Mammary epithelial cell (primary cell): ENCODE measurements at regions of chr9 and their contacts with region 1.

Region 1: DNA sequence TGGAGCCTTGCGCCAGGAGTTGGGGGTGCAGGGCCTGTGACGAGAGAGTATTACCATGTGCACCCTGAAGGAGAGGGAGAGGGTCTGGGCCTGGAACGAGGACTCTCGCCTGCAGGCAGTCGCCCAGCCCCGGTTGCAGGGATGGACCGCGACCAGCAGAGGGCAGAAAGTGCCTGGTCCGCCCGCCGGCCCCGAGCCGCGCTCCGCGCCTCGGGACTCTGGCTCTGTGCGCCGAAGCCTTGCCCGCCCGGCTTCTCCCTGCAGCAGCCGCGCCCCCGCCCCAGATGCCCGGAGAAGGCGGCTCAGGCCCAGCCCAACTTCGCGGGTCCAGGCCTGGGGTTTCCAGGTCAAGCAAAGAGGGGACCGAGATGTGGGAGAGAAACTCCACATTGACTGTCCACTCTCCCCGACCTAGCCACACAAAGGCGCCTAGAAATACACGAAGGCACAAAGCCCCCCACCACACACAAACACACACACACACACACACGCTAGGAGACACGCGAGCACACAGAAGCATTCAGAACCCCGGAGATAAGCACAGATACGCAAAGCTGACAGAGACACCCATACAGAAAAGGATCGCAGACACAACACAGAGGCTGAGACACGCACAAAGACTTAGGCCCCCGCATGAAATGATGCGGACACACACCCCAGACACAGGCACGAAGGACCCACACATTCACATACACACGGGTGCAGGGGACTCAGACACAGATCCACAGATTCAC is 2.0 kb upstream of the LMX1B start:
- DNase-seq: peak; percentile 66
- H3K4me3 ChIP-seq: peak overlapping the region; percentile 1 to 78 (median 63)
- H3K27ac ChIP-seq: no peak overlapping the region
- H3K4me1 ChIP-seq: peaks cover 29% of the 10 kb centered on the region
- H3K27me3 ChIP-seq: no peaks in the 10 kb centered on the region
- CTCF ChIP-seq: peak; percentile 77 to 87

Region 2: DNA sequence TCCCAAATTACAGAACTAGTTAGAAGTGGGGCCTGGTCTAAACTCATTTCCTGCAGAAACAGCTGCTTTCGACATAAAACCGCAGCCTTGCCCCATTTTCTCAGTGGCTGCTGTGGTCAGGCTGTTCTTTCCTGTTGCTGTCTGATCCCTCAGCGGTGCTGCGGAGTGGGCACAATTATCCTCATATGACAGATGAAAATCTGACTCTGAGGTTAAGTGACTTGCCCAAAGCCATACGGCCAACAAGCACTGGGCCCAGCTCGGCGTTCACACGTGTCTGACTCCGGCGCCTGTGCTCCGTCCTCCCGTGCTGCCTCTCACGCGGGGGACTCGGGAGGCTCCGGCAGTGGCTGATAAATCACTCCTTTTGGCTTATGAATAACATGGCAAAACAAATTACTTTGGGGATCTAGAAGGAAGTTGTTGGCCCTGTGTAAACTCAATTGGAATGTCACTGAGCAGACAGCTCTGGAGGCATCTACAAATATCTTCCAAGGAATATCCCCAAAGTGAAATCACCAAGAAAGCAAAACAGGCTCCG is 140.6 kb before region 1 on chr9:
- CTCF ChIA-PET with region 1: no interaction called
- dilution Hi-C with region 1: no loop called
- in situ Hi-C with region 1: no loop called
- intact Hi-C with region 1: no loop called
- DNase-seq: no peak
- H3K4me3 ChIP-seq: no peak overlapping the region
- H3K27ac ChIP-seq: no peak overlapping the region
- H3K4me1 ChIP-seq: no peaks in the 10 kb centered on the region
- H3K27me3 ChIP-seq: no peaks in the 10 kb centered on the region
- CTCF ChIP-seq: no peak

Region 3: GRCh38 chr9:126500684-126501382 is 110.9 kb before region 1 on chr9:
- CTCF ChIA-PET with region 1: no interaction called
- dilution Hi-C with region 1: no loop called
- in situ Hi-C with region 1: no loop called
- intact Hi-C with region 1: loop called (anchors 5 kb)
- DNase-seq: peak; percentile 62
- H3K4me3 ChIP-seq: no peak overlapping the region
- H3K27ac ChIP-seq: no peak overlapping the region
- H3K4me1 ChIP-seq: peaks cover 21% of the 10 kb centered on the region
- H3K27me3 ChIP-seq: no peaks in the 10 kb centered on the region
- CTCF ChIP-seq: peak; percentile 88 to 96

Region 4: GRCh38 chr9:126635661-126636439 is 24.1 kb after region 1 on chr9:
- CTCF ChIA-PET with region 1: no interaction called
- dilution Hi-C with region 1: no loop called
- in situ Hi-C with region 1: no loop called
- intact Hi-C with region 1: loop called (anchors 2 kb)
- DNase-seq: no peak
- H3K4me3 ChIP-seq: no peak overlapping the region
- H3K27ac ChIP-seq: no peak overlapping the region
- H3K4me1 ChIP-seq: peaks cover 53% of the 10 kb centered on the region
- H3K27me3 ChIP-seq: no peaks in the 10 kb centered on the region
- CTCF ChIP-seq: no peak

Region 5: GRCh38 chr9:126690431-126691350 is 78.9 kb after region 1 on chr9:
- CTCF ChIA-PET with region 1: interaction called, 7 read pairs
- dilution Hi-C with region 1: loop called (anchors 10 kb)
- in situ Hi-C with region 1: loop called (anchors 5 kb)
- intact Hi-C with region 1: loop called (anchors 1 kb)
- DNase-seq: no peak
- H3K4me3 ChIP-seq: no peak overlapping the region
- H3K27ac ChIP-seq: no peak overlapping the region
- H3K4me1 ChIP-seq: peaks cover 14% of the 10 kb centered on the region
- H3K27me3 ChIP-seq: no peaks in the 10 kb centered on the region
- CTCF ChIP-seq: peak; percentile 64 to 83

Region 6: GRCh38 chr9:126791406-126792151 is 179.8 kb after region 1 on chr9:
- CTCF ChIA-PET with region 1: no interaction called
- dilution Hi-C with region 1: loop called (anchors 25 kb)
- in situ Hi-C with region 1: loop called (anchors 5 kb)
- intact Hi-C with region 1: no loop called
- DNase-seq: peak; percentile 99
- H3K4me3 ChIP-seq: no peak overlapping the region
- H3K27ac ChIP-seq: peak overlapping the region; percentile 94
- H3K4me1 ChIP-seq: peaks cover 50% of the 10 kb centered on the region
- H3K27me3 ChIP-seq: no peaks in the 10 kb centered on the region
- CTCF ChIP-seq: no peak